ENCODE measurements at regions of chr18 and their contacts with region 1.

Region 1: GRCh38 chr18:9913526-9914333 is at the start of gene VAPA:
- DNase-seq: peak; percentile 93 to 99 (median 98)

Region 2: DNA sequence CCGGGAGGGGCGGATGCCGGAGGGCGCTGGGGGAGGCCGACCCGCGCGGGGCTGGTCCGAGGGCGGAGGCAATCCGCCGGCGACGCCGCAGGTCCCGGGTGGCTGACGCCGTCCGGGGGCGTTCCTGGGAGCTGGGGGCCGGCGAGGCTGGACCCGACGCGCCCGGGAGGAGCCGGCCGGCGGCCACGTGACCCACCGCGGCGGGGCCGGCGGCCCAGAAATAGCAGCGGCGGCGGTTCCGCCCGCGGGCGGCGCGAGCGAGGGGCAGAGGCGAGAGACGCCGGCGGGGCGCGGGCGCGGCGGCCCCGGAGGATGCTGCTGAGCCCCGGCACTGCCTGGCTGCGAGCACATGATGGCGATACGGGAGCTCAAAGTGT is 205.7 kb before region 1 on chr18 and contains the start of gene RAB31:
- intact Hi-C with region 1: loop called (anchors 5 kb)
- DNase-seq: peak; percentile 9 to 90 (median 76)

Region 3: DNA sequence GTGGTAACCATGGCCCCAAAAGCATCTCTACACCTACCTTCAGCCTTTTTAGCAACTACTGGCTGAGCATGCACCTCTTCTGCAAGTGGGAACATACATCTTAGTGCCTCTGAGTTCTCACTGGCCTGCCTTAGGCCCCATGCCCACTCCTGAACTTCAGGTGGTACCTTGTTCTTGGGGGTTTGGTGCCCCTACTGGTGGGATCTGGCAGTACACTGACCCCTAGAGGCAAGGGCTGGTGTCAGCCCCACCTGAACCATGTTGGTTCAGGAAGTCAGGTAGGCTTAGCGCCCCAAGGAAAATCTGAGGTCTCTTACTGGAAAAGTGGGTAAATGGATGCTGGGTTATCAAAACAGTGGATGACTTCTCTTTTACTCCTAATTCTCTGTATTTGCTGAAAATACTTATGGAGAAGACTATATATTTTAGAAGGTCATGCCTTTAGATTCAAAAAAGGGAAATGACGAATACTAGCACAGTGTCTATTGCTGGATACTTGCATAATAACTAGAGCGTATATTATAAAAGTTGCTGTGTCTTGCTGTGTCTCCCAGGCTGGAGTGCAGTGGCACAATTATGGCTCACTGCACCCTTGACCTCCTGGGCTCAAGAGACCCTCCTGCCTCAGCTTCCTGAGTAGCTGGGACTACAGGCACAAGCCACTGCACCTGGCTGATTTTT is 121.0 kb before region 1 on chr18:
- intact Hi-C with region 1: loop called (anchors 10 kb)
- DNase-seq: peak in 4 of 42 donors; percentile 21 to 69 (median 44)

Measured in head of caudate nucleus (tissue), 42 donors.